Dorsolateral prefrontal cortex (tissue), 120 donors: ENCODE measurements at regions of chr11 and their contacts with region 1.

Region 1: GRCh38 chr11:120335908-120336640 is at the start of gene ARHGEF12:
- DNase-seq: peak; percentile 81 to 95 (median 91)
- H3K4me3 ChIP-seq: peak within 1 kb of the TSS; percentile 72 to 96 (median 89)
- H3K27ac ChIP-seq: peak within 1 kb of the TSS; percentile 83 to 99 (median 97)
- H3K27me3 ChIP-seq: no peaks in the 10 kb centered on the region
- CTCF ChIP-seq: peak in 46 of 56 donors; percentile 15 to 70 (median 45)
- total RNA-seq, gene ARHGEF12: 103 to 277 (median 191) TPM

Region 2: DNA sequence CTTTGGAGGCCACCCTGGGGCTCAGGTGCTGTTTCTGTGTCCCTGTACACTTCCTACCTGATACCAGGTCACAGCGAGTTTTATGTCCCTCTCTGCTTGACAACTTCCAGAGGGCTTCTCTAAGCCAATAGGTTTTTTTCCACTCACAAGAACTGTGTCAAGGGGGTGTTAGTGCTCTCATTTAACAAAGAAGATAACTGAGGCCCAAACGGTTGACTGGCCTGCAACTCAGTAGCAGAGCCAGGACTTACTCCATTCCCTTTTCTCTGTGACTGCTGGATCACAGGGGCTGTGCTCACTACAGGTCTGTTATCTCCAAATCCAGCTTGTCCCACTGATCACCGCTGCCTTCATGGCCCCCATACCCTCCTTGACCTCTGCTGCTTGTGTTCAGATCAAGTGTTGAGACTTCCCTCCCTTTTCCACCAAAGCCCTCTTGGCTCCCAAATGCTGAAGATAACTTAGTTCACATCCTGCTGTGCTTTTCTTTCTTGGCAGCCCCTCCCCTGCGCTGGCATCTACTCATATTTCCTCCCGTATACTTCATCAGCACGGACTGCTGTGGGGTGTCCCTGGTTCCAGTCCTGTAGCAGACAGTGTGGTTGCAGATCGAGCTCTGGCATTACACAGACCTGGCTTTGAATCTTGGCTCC is 54.8 kb before region 1 on chr11:
- intact Hi-C with region 1: no loop called
- DNase-seq: no peak
- H3K4me3 ChIP-seq: no peak overlapping the region
- H3K27ac ChIP-seq: no peak overlapping the region
- H3K27me3 ChIP-seq: no peaks in the 10 kb centered on the region
- CTCF ChIP-seq: no peak

Region 3: GRCh38 chr11:120391292-120391691 is 55.2 kb after region 1 on chr11:
- intact Hi-C with region 1: loop called (anchors 2 kb)
- DNase-seq: peak in 1 of 10 donors; percentile 50
- H3K4me3 ChIP-seq: peak overlapping the region in 13 of 59 donors; percentile 0 to 27 (median 12)
- H3K27ac ChIP-seq: peak overlapping the region in 55 of 59 donors; percentile 6 to 85 (median 59)
- H3K27me3 ChIP-seq: no peaks in the 10 kb centered on the region
- CTCF ChIP-seq: peak in 7 of 56 donors; percentile 8 to 32 (median 13)

Region 4: DNA sequence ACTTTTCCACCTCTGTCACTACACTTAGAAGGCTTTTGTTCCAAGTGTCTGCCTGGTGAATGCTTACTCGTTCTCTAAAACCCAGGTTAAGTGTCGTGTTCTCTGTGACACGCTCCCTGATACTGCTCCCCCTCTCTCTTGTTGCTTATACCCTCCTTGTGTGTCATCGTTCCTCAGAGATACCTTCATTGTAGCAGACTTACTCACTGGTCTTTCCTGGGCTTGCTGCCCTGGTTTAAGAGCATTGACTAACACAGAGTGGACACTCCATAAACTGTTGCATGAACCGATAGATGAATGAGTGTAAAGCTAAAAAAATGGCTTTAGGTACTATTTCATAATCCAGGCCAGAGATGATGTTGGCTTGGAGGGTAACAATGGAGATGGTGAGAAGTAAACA is 346.8 kb after region 1 on chr11:
- intact Hi-C with region 1: loop called (anchors 10 kb)
- DNase-seq: no peak
- H3K4me3 ChIP-seq: no peak overlapping the region
- H3K27ac ChIP-seq: no peak overlapping the region
- H3K27me3 ChIP-seq: no peaks in the 10 kb centered on the region
- CTCF ChIP-seq: no peak